Dendritic cell treated with granulocyte-macrophage colony-stimulating factor and Interleukin-4, amounts not matched to agents 40 ng/mL and 50 ng/mL, for 4 days (primary cell): ENCODE measurements at regions of chr4 and their contacts with region 1.

Region 1: DNA sequence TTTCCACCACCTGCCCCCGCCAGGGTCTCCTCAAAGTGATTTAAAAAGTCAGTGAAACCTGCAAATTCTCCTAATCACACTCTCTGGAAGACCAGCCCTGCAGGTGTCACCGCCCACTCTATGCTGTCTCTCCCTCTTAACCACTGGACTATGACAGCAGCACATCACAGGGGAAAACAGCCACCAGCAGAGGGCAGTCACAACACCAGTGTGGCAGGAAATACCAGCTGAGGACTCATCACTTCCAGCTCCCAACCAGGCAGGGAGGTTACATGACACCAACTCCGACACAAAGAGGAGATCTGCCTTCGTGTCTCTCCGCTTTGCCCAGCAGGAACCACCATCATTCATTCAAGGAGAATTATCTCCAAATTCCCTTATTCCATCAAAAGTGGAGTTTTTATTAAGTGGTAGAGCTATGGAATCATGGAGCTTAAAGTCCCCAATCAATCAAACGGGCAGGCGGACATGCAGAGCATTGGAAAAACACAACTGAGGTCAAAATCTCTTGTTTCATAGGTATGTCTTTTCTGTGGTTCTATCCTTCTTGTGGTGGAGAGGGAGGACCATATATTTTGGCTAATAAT is 91.3 kb downstream of the NSUN7 start:
- H3K4me3 Mint-ChIP-seq: no peak overlapping the region
- H3K27ac Mint-ChIP-seq: peak overlapping the region; percentile 18
- H3K4me1 Mint-ChIP-seq: peaks cover 13% of the 10 kb centered on the region
- H3K27me3 Mint-ChIP-seq: no peaks in the 10 kb centered on the region

Region 2: GRCh38 chr4:39855909-39856512 is 985.1 kb before region 1 on chr4:
- intact Hi-C with region 1: no loop called
- H3K4me3 Mint-ChIP-seq: no peak overlapping the region
- H3K27ac Mint-ChIP-seq: no peak overlapping the region
- H3K4me1 Mint-ChIP-seq: peaks cover 5% of the 10 kb centered on the region
- H3K27me3 Mint-ChIP-seq: no peaks in the 10 kb centered on the region

Region 3: DNA sequence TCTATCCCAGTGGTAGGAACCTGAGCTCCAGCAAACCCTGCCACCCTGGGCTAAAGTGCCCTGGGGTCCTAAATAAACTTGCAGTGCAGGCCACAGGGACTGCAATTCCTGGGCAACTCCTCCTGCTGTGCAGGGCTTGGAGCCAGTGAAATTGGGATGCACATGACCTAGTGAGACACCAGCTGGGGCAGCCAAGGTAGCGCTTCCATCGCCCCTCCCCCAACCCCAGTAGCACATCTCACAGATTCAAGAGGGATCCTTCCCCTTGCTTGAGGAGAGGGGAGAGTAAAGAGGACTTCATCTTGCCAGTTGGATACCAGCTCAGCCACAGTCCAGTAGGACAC is 461.8 kb before region 1 on chr4:
- intact Hi-C with region 1: no loop called
- H3K4me3 Mint-ChIP-seq: no peak overlapping the region
- H3K27ac Mint-ChIP-seq: no peak overlapping the region
- H3K4me1 Mint-ChIP-seq: no peaks in the 10 kb centered on the region
- H3K27me3 Mint-ChIP-seq: peaks cover 2% of the 10 kb centered on the region

Region 4: DNA sequence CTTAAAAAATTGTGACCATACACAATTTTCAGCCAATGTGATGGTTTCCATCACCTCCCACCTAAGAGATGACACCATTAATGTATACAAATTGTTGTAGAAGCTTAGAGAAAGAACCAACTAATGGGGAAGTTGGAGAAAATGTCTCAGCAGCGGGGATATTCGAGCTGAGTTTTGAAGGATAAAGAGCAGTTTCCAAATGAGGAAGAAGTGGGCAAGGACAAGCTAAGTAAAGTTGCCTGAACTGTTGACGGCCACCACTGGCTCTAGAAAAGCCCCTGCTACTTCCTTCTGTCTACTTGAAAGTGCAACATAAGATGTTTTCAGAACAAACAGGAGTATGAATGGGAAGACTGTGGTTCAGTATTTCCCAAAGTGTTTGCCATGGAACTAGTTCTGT is 413.9 kb before region 1 on chr4:
- intact Hi-C with region 1: no loop called
- H3K4me3 Mint-ChIP-seq: no peak overlapping the region
- H3K27ac Mint-ChIP-seq: peak overlapping the region; percentile 32
- H3K4me1 Mint-ChIP-seq: peaks cover 41% of the 10 kb centered on the region
- H3K27me3 Mint-ChIP-seq: no peaks in the 10 kb centered on the region

Region 5: GRCh38 chr4:40736910-40737309 is 104.2 kb before region 1 on chr4:
- intact Hi-C with region 1: loop called (anchors 1 kb)
- H3K4me3 Mint-ChIP-seq: no peak overlapping the region
- H3K27ac Mint-ChIP-seq: no peak overlapping the region
- H3K4me1 Mint-ChIP-seq: peaks cover 33% of the 10 kb centered on the region
- H3K27me3 Mint-ChIP-seq: no peaks in the 10 kb centered on the region

Region 6: DNA sequence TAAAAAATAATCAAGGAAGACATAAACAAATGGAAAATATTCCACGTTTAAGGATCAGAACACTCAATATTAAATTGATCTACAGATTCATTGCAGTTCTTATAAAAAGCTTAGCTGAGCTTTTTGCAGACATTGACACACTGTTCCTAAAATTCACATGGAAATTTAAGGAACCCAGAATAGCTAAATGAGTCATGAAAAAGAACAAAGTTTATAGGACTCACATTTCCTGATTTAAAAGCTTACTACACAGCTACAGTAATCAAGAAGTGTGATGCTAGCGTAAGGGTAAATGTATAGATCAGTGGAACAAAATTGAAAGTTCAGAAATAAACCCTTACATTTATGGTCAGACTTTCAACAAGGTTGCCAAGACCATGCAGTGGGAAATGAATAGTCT is 58.2 kb before region 1 on chr4:
- intact Hi-C with region 1: loop called (anchors 5 kb)
- H3K4me3 Mint-ChIP-seq: no peak overlapping the region
- H3K27ac Mint-ChIP-seq: peak overlapping the region; percentile 69
- H3K4me1 Mint-ChIP-seq: peaks cover 15% of the 10 kb centered on the region
- H3K27me3 Mint-ChIP-seq: peaks cover 2% of the 10 kb centered on the region

Region 7: GRCh38 chr4:40881096-40881495 is 40.0 kb after region 1 on chr4:
- intact Hi-C with region 1: no loop called
- H3K4me3 Mint-ChIP-seq: no peak overlapping the region
- H3K27ac Mint-ChIP-seq: no peak overlapping the region
- H3K4me1 Mint-ChIP-seq: peaks cover 10% of the 10 kb centered on the region
- H3K27me3 Mint-ChIP-seq: no peaks in the 10 kb centered on the region

Region 8: GRCh38 chr4:40897557-40898203 is 56.6 kb after region 1 on chr4:
- intact Hi-C with region 1: loop called (anchors 5 kb)
- H3K4me3 Mint-ChIP-seq: peak overlapping the region; percentile 50
- H3K27ac Mint-ChIP-seq: no peak overlapping the region
- H3K4me1 Mint-ChIP-seq: peaks cover 5% of the 10 kb centered on the region
- H3K27me3 Mint-ChIP-seq: no peaks in the 10 kb centered on the region